Ascending aorta (tissue), 2 donors: ENCODE measurements at regions of chr16 and their contacts with region 1.

Region 1: GRCh38 chr16:12067714-12068401 is 91.3 kb downstream of the SNX29 start:
- DNase-seq: peak in 1 of 2 donors; percentile 82
- H3K4me3 ChIP-seq: no peak overlapping the region
- H3K27ac ChIP-seq: no peak overlapping the region
- H3K4me1 ChIP-seq: peaks cover 7 to 11% of the 10 kb centered on the region in 2 donors
- H3K27me3 ChIP-seq: no peaks in the 10 kb centered on the region
- CTCF ChIP-seq: peak; percentile 77 to 96 (median 95)

Region 2: DNA sequence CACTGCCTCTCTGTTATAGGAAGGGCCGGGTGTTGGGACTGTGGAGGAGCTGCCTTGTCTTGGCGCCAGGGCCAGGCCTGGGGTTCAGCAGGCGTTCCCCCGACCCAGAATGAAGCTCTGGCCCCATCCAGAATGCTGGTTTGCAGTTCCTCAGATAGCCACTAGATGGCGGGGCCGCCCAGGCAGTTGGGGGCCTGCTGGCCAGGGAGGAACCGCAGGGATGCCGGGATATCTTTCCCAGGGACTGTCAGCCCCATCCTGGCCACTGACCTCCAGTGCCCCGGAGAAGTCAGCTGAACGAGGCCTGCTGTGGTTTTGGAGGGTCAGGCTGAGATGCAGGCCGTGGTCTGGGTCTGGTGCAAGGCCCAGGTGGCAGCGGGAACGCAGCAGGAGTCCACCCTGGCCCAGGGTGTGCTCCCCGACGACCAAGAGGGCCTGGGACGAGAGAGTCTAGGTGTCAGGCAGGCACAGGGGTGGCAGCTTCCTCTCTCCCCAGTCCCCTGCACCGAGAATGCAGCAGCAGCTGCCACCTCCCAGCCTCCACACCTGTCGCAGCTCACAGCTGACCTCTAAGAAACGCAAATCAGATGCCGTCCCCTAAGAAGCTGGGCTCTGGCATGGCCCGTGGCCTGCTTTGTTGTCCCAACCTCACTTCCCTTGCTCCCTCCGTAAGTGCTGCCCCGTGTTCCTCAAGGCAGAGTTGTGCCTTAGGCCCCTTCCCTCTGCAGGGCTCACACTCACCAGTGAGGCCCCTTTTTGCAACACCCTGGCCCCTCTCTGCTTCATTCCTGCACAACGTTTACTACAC is 671.4 kb before region 1 on chr16:
- intact Hi-C with region 1: loop called (anchors 10 kb)
- DNase-seq: peak in 1 of 2 donors; percentile 83
- H3K4me3 ChIP-seq: no peak overlapping the region
- H3K27ac ChIP-seq: no peak overlapping the region
- H3K4me1 ChIP-seq: peaks cover 0 to 3% of the 10 kb centered on the region in 2 donors
- H3K27me3 ChIP-seq: no peaks in the 10 kb centered on the region
- CTCF ChIP-seq: peak; percentile 96 to 99 (median 99)

Region 3: DNA sequence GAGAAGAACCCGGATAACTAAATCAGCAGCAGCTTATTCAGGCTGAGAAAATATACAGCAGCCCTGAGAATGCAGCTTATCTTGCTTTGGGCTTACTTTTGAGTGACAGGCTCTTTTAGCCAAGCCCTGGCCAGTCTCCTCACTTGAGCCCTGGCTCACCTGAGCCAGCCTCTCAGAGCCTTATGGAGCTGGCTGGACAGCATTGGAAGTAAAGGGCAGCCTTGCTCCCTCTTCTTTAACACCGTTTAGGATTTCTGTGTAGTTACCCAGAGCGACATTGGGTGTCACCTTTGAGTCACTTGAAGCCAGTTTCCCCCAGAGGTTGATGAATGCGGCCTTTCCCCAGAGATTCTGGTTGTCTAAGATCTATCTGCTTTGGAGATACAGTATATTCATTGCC is 118.3 kb before region 1 on chr16:
- intact Hi-C with region 1: loop called (anchors 2 kb)
- DNase-seq: no peak
- H3K4me3 ChIP-seq: no peak overlapping the region
- H3K27ac ChIP-seq: no peak overlapping the region
- H3K4me1 ChIP-seq: no peaks in the 10 kb centered on the region
- H3K27me3 ChIP-seq: no peaks in the 10 kb centered on the region
- CTCF ChIP-seq: peak; percentile 15 to 46 (median 38)

Region 4: GRCh38 chr16:11977376-11978041 is 90.3 kb before region 1 on chr16:
- intact Hi-C with region 1: loop called (anchors 1 kb)
- DNase-seq: peak in 1 of 2 donors; percentile 66
- H3K4me3 ChIP-seq: peak overlapping the region; percentile 78 to 92
- H3K27ac ChIP-seq: peak overlapping the region; percentile 73 to 83
- H3K4me1 ChIP-seq: peaks cover 0 to 8% of the 10 kb centered on the region in 2 donors
- H3K27me3 ChIP-seq: no peaks in the 10 kb centered on the region
- CTCF ChIP-seq: no peak

Region 5: DNA sequence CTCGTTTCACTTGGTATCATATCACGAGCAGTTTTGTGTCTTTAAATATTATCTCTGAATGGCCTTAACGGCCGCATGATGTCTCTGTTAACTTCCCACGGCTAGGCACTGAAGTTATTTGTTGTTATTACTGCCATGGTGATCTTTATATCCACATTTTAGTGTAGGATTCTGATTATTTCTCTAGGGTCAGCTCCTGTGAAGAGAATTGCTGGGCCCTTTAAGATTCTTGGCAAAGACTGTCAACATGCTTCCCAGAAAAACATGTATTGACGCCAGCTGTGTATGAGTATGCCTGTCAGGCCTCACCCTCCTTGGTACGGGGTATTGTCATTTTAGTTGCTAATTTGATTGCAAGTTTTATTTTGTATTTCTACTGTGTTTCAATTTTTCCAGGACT is 172.2 kb after region 1 on chr16:
- intact Hi-C with region 1: no loop called
- DNase-seq: no peak
- H3K4me3 ChIP-seq: peak overlapping the region in 1 of 2 donors; percentile 9
- H3K27ac ChIP-seq: no peak overlapping the region
- H3K4me1 ChIP-seq: peaks cover 0 to 5% of the 10 kb centered on the region in 2 donors
- H3K27me3 ChIP-seq: no peaks in the 10 kb centered on the region
- CTCF ChIP-seq: no peak

Region 6: DNA sequence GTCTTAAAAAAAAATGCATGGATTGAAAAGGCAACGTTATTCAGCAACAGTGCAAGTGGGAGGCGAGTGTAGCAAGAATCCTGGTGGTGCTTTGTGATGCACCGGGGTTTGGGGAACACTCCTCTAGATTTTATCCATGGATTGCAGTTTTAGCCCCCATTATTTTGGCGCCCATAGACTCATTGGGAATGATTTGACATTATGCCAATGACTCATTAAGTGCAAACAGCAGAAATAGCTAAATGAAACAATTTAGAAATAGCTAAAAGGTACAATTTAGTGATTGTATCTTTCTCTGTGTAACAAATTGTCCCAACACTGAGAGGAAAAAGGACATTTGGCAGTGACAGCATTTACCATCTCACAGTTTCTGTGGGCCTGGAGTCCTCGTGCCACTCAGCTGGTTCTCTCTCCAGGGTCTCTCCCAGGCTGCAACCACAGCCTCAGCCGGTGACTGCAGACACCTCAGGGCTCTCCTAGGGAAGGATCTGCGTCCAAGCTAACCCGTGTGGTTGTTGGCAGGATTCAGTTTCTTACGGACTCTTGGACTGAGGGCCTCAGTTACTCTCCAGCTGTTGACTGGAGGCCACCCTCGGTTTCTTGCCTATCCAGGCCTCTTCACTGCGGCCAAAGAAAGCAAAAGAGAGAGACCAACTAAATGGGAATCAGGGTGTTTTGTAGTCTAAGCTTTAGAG is 307.3 kb after region 1 on chr16:
- intact Hi-C with region 1: no loop called
- DNase-seq: no peak
- H3K4me3 ChIP-seq: no peak overlapping the region
- H3K27ac ChIP-seq: peak overlapping the region in 1 of 2 donors; percentile 14
- H3K4me1 ChIP-seq: peaks cover 0 to 6% of the 10 kb centered on the region in 2 donors
- H3K27me3 ChIP-seq: no peaks in the 10 kb centered on the region
- CTCF ChIP-seq: no peak

Region 7: DNA sequence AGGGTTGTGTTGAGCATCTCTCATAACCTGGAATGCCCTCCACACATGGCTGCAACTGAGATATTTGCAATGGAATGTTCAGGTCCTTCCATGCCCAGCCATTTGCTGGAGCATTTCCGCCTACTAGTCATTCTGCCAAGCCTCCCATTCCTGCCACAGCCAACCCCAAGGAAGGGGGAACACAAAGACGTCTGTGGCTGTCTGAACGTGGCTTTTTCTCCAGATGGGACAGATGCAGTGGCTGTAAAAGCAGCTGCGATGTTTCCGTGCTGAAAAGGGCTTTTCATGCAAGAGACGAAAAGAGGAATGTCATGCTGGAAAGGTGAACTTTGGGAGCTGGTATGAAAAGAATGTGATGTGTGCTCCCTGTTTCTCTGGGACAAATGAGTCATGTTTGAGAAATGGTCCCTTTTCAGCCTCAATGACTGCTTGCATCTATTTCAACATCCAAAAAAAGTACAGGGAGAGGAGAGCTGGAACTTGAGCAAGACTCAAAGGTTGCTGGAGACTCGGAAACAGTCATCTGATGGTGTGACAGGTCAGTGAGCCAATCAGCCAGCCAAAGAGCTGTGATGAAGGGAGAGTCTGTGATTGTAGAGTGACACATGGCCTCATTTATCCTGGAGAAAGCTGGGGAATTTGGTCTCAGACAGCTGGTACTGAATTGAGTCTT is 1042.4 kb after region 1 on chr16:
- intact Hi-C with region 1: loop called (anchors 10 kb)
- DNase-seq: peak; percentile 12 to 91
- H3K4me3 ChIP-seq: no peak overlapping the region
- H3K27ac ChIP-seq: peak overlapping the region; percentile 74 to 83
- H3K4me1 ChIP-seq: peaks cover 4 to 18% of the 10 kb centered on the region in 2 donors
- H3K27me3 ChIP-seq: no peaks in the 10 kb centered on the region
- CTCF ChIP-seq: no peak